Posterior vena cava (tissue), 2 donors: ENCODE measurements at regions of chrX and their contacts with region 1.

Region 1: GRCh38 chrX:9033179-9033578 is 748 bp downstream of the FAM9B start:
- DNase-seq: no peak

Region 2: DNA sequence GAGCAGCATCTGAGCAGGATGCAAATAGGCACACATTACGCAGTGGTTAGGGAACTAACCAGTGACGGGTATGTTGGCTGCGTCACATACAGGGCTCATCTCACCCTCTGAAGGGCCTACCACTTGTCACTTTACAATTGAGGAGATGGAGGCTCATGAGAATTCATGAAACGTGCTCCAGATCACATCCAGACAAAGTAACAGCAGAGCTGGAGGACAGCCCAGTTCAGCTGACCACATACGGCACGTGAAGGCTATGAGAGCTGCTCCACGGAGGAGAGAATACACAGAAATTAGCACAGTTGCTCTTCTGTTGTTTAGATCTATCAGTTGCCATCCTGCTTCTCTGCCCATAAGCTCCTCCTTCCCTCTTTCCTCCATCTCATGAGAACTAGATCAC is 77.7 kb before region 1 on chrX:
- intact Hi-C with region 1: loop called in 1 of 2 experiments (anchors 2 kb)
- DNase-seq: no peak

Region 3: DNA sequence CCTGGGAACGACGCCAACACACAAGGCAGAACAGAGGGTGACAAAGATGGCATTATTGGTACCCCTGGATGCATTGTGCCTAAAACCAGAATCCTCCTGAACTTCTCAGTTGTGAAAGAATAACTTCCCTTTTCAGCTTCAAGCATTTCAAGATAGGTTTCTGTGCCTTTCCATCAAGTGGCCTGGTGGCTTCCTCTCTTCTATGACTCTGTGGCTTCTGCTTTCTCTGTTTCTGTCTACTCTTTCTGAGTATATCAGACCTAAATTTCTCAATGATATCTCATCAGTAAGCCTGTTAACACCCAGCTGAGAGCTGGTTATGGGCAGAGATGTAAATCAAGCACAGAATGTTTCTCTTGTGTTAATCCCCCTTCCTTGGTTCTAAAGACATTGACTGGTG is 22.2 kb after region 1 on chrX:
- intact Hi-C with region 1: no loop called
- DNase-seq: no peak

Region 4: GRCh38 chrX:9087271-9088040 is 54.3 kb after region 1 on chrX:
- intact Hi-C with region 1: no loop called
- DNase-seq: no peak